ENCODE measurements at regions of chr13 and their contacts with region 1.

Region 1: GRCh38 chr13:26698392-26699196 is 62.0 kb downstream of the GPR12 start:
- DNase-seq: peak; percentile 36
- H3K4me3 ChIP-seq: peak overlapping the region; percentile 18
- CTCF ChIP-seq: peak; percentile 94

Region 2: GRCh38 chr13:26476111-26476781 is 222.3 kb before region 1 on chr13:
- CTCF ChIA-PET with region 1: interaction called, 73 read pairs
- POLR2A ChIA-PET with region 1: no interaction called
- DNase-seq: no peak
- H3K4me3 ChIP-seq: peak overlapping the region; percentile 23
- CTCF ChIP-seq: no peak

Region 3: GRCh38 chr13:26482451-26483197 is 216.0 kb before region 1 on chr13:
- CTCF ChIA-PET with region 1: interaction called, 73 read pairs
- POLR2A ChIA-PET with region 1: no interaction called
- DNase-seq: no peak
- H3K4me3 ChIP-seq: no peak overlapping the region
- CTCF ChIP-seq: peak; percentile 77

Region 4: DNA sequence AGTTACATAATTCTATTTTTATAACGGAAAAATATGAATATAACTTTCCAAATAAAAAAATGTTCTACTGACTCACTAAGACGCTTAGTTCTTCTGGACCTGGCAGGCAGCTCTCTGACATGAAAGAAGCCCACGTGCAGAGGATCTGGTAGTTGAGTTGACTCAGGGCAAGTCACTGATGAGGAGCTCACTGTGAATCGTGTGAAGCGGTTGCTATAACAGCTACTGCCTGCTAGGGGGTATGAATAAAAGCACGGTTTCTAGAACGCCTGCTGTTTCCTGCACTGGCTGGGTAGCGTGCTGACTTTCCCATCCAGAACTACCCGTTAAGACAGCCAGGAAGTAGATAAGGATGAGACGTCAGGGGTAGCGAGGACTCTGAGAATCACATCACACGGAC is 195.8 kb before region 1 on chr13:
- CTCF ChIA-PET with region 1: interaction called, 55 read pairs
- POLR2A ChIA-PET with region 1: no interaction called
- DNase-seq: no peak
- H3K4me3 ChIP-seq: no peak overlapping the region
- CTCF ChIP-seq: no peak

Region 5: GRCh38 chr13:26656919-26657318 is 41.7 kb before region 1 on chr13:
- CTCF ChIA-PET with region 1: interaction called, 19 read pairs
- POLR2A ChIA-PET with region 1: no interaction called
- DNase-seq: peak; percentile 51
- H3K4me3 ChIP-seq: no peak overlapping the region
- CTCF ChIP-seq: no peak

Region 6: DNA sequence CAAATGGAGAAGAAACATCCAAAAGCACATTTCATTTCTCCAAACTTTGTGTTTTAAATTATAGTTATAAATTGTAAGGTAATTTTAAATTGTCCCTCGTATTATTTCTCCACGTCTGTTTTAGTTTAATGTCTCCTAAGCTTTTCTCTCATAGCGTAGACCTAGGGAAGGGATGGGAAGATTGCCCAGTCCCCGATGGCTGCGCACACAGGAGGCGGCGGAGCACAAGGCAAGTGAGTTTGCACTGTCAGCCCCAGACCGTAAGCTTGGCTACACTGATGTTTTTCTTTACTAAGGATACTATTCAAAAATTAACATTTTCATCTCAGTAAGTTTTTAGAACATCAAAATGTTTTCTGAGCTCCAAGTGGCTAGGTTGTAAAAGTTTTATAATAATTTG is 10.3 kb before region 1 on chr13:
- CTCF ChIA-PET with region 1: interaction called, 14 read pairs
- POLR2A ChIA-PET with region 1: no interaction called
- DNase-seq: no peak
- H3K4me3 ChIP-seq: no peak overlapping the region
- CTCF ChIP-seq: no peak

Region 7: GRCh38 chr13:26929971-26930730 is 231.6 kb after region 1 on chr13:
- CTCF ChIA-PET with region 1: interaction called, 11 read pairs
- POLR2A ChIA-PET with region 1: no interaction called
- DNase-seq: no peak
- H3K4me3 ChIP-seq: no peak overlapping the region; the same call in 1 of the 2 replicates
- CTCF ChIP-seq: peak; percentile 83

Region 8: GRCh38 chr13:27339299-27339698 is 640.7 kb after region 1 on chr13:
- CTCF ChIA-PET with region 1: no interaction called
- POLR2A ChIA-PET with region 1: no interaction called
- DNase-seq: no peak
- H3K4me3 ChIP-seq: no peak overlapping the region
- CTCF ChIP-seq: peak; percentile 63

Measured in AG04449 (cell line).